ENCODE measurements at regions of chr22 and their contacts with region 1.

Region 1: DNA sequence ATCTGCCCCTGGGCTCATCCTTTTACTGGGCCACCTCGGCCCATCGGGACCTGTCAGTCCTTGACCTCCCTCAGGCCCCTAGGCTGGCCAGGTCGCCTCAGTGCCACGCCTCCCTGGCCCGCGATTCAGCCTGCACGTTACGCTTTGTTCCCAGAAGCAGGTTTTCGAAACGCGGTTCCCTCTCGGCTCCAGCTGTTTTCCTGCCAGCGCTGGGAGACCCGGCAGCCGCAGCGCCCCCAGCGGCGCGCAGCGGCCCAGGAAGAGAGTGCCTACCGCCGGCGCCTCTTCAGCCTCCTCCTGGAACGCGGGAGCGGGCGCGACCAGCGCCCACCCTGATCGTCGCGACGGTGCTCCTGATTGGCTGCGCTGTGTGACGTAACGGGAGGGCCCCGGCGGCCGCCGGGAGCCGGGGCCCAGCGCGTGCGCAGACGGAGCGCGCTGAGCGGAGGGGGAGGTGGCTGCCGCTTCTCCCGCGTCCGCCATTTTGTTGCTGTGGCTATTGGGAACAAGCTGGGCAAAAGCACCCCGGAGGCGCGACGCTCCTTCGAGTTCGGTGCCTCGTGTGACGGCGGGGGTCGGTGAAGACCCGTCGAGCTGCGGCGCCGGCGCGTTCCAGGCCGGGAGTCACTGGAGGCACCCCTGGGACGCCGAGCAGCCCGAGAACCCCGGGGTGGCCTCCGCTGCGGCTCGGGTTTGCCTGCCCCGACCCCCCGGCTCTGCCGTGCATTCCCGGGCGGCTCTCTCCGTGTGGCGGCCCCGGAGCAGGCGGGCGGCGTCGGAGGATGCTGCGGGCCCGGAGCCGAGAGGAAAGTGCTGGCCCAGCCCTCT is at the start of gene CRKL:
- DNase-seq: peak; percentile 83
- ATAC-seq: peak; percentile 96
- H3K4me3 ChIP-seq: peak within 1 kb of the TSS; percentile 92
- H3K27ac ChIP-seq: peak within 1 kb of the TSS; percentile 85
- H3K4me1 ChIP-seq: peaks cover 2% of the 10 kb centered on the region
- H3K27me3 ChIP-seq: no peaks in the 10 kb centered on the region
- CTCF ChIP-seq: peak; percentile 92 to 96 (median 94); a peak in 5 of 6 replicates
- EP300 ChIP-seq: peak in 1 of 2 experiments; percentile 23; a peak in 1 of 4 replicates
- POLR2A ChIP-seq: peak; percentile 91
- RAD21 ChIP-seq: peak; percentile 32; the same call in 1 of the 2 replicates
- polyA plus RNA-seq, gene CRKL: 12.6 to 17.1 TPM

Region 2: GRCh38 chr22:20819471-20819870 is 97.7 kb before region 1 on chr22:
- CTCF ChIA-PET with region 1: no interaction called
- POLR2A ChIA-PET with region 1: no interaction called
- RAD21 ChIA-PET with region 1: no interaction called
- SMC1A ChIA-PET with region 1: no interaction called
- in situ Hi-C with region 1: no loop called
- intact Hi-C with region 1: no loop called
- DNase-seq: no peak
- ATAC-seq: no peak
- H3K4me3 ChIP-seq: no peak overlapping the region
- H3K27ac ChIP-seq: no peak overlapping the region
- H3K4me1 ChIP-seq: no peaks in the 10 kb centered on the region
- H3K27me3 ChIP-seq: no peaks in the 10 kb centered on the region
- CTCF ChIP-seq: no peak
- EP300 ChIP-seq: no peak
- POLR2A ChIP-seq: no peak
- RAD21 ChIP-seq: no peak

Region 3: DNA sequence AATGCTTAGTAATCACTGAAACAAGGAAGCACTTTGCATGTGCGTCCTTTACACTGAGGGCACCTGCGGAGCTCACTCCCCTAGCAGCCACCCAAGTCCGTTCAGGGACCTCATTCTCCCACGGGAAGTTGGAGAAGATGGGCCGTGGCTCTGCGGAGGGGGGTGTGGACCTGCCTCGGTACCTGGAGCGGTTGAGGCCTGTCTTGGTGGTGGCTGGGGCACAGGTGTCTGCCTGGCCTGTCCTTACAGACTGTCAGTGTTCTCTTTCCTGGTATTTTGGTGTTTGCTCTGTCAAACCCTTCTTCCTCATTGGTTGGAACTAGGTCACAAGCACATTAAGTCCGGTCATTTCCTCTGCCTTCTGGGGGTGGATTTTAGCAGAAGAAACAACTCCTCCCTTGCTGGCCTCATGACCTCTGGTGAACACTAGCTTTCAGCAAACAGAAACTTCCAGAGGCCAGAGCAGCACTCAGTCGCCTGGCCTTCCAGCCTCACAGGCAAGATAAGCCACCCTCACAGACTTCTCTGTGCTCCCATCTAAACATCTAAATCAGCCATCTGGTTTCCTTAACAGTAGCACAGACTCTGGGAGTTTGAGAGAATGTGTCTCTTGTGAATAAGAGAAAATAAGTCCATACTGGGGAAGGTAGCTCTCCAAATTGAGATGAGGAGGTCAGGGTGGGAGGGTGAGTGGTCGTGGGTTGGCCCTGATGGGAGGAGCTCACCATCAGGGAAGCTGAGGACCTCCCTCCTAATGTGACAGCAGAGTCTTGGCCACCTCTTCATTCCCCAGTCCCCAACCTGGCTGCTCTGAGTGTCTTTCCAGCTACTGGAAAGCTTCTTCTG is 49.8 kb before region 1 on chr22:
- CTCF ChIA-PET with region 1: no interaction called
- POLR2A ChIA-PET with region 1: no interaction called
- RAD21 ChIA-PET with region 1: no interaction called
- SMC1A ChIA-PET with region 1: no interaction called
- in situ Hi-C with region 1: loop called (anchors 10 kb)
- intact Hi-C with region 1: no loop called
- DNase-seq: no peak
- ATAC-seq: peak; percentile 85
- H3K4me3 ChIP-seq: no peak overlapping the region
- H3K27ac ChIP-seq: no peak overlapping the region
- H3K4me1 ChIP-seq: no peaks in the 10 kb centered on the region
- H3K27me3 ChIP-seq: no peaks in the 10 kb centered on the region
- CTCF ChIP-seq: no peak
- EP300 ChIP-seq: no peak
- POLR2A ChIP-seq: no peak
- RAD21 ChIP-seq: no peak

Region 4: GRCh38 chr22:21961886-21962654 is 1044.9 kb after region 1 on chr22:
- CTCF ChIA-PET with region 1: no interaction called
- POLR2A ChIA-PET with region 1: no interaction called
- RAD21 ChIA-PET with region 1: no interaction called
- SMC1A ChIA-PET with region 1: no interaction called
- in situ Hi-C with region 1: no loop called
- intact Hi-C with region 1: no loop called
- DNase-seq: no peak
- ATAC-seq: no peak
- H3K4me3 ChIP-seq: no peak overlapping the region
- H3K27ac ChIP-seq: no peak overlapping the region
- H3K4me1 ChIP-seq: no peaks in the 10 kb centered on the region
- H3K27me3 ChIP-seq: no peaks in the 10 kb centered on the region
- CTCF ChIP-seq: no peak
- EP300 ChIP-seq: no peak
- POLR2A ChIP-seq: no peak
- RAD21 ChIP-seq: no peak